Right cardiac atrium (tissue), 5 donors: ENCODE measurements at regions of chr4 and their contacts with region 1.

Region 1: GRCh38 chr4:147590249-147590920 is 26.8 kb upstream of the TMEM184C start:
- DNase-seq: peak; percentile 43 to 84 (median 60)
- ATAC-seq: peak; percentile 67 to 68
- H3K4me3 ChIP-seq: no peak overlapping the region
- H3K27ac ChIP-seq: no peak overlapping the region
- H3K4me1 ChIP-seq: no peaks in the 10 kb centered on the region
- H3K27me3 ChIP-seq: no peaks in the 10 kb centered on the region

Region 2: DNA sequence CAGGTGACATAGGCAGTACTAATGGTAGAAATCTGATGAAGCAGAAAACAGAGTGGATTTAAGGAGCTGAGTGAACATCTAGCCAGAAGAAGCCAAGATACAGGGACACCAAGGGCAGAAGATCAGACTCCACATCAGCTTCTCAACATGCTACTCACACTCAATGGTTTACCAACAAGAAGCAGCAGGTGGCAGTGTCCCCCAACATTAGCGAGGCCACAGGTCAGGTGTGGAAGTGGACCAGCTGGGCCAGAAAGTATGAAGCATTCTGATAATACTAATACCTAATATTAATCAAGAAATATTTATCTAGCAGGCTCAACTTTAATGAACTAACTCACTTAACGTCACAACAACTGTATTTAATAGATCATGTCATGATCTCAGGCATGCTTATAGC is 571.3 kb before region 1 on chr4:
- intact Hi-C with region 1: loop called in 2 of 4 experiments (anchors 10 kb)
- DNase-seq: peak; percentile 42 to 85 (median 77)
- ATAC-seq: peak; percentile 81 to 86
- H3K4me3 ChIP-seq: no peak overlapping the region
- H3K27ac ChIP-seq: no peak overlapping the region
- H3K4me1 ChIP-seq: no peaks in the 10 kb centered on the region
- H3K27me3 ChIP-seq: no peaks in the 10 kb centered on the region

Region 3: GRCh38 chr4:147029296-147029695 is 561.1 kb before region 1 on chr4:
- intact Hi-C with region 1: loop called in 1 of 4 experiments (anchors 10 kb)
- DNase-seq: no peak
- ATAC-seq: no peak
- H3K4me3 ChIP-seq: no peak overlapping the region
- H3K27ac ChIP-seq: no peak overlapping the region
- H3K4me1 ChIP-seq: no peaks in the 10 kb centered on the region
- H3K27me3 ChIP-seq: no peaks in the 10 kb centered on the region

Region 4: DNA sequence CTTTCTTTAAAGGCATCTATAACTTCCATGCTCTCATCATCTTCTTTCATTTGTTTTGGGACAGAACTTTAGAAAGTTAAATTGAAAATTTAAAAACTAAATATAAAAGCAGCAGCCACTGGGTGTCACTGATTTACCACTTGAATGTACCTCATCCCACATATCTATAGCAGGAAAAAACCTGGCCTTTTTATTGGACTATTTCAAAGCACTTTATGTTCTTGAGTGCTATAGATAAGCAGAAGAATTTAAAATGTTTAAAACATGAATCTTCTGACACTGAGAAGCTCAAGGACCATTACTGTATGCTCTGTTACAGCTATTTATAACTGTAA is 479.4 kb before region 1 on chr4:
- intact Hi-C with region 1: loop called in 3 of 4 experiments (anchors 2 to 5 kb)
- DNase-seq: no peak
- ATAC-seq: peak in 1 of 2 donors; percentile 61
- H3K4me3 ChIP-seq: no peak overlapping the region
- H3K27ac ChIP-seq: no peak overlapping the region
- H3K4me1 ChIP-seq: no peaks in the 10 kb centered on the region
- H3K27me3 ChIP-seq: no peaks in the 10 kb centered on the region

Region 5: GRCh38 chr4:147160908-147161513 is 429.4 kb before region 1 on chr4:
- intact Hi-C with region 1: loop called in 2 of 4 experiments (anchors 2 to 5 kb)
- DNase-seq: no peak
- ATAC-seq: peak; percentile 62 to 70
- H3K4me3 ChIP-seq: no peak overlapping the region
- H3K27ac ChIP-seq: no peak overlapping the region
- H3K4me1 ChIP-seq: peaks cover 4% of the 10 kb centered on the region
- H3K27me3 ChIP-seq: no peaks in the 10 kb centered on the region

Region 6: GRCh38 chr4:147201016-147201415 is 389.4 kb before region 1 on chr4:
- intact Hi-C with region 1: no loop called
- DNase-seq: no peak
- ATAC-seq: no peak
- H3K4me3 ChIP-seq: no peak overlapping the region
- H3K27ac ChIP-seq: no peak overlapping the region
- H3K4me1 ChIP-seq: no peaks in the 10 kb centered on the region
- H3K27me3 ChIP-seq: no peaks in the 10 kb centered on the region